H1 (cell line): ENCODE measurements at regions of chr5 and their contacts with region 1.

Region 1: DNA sequence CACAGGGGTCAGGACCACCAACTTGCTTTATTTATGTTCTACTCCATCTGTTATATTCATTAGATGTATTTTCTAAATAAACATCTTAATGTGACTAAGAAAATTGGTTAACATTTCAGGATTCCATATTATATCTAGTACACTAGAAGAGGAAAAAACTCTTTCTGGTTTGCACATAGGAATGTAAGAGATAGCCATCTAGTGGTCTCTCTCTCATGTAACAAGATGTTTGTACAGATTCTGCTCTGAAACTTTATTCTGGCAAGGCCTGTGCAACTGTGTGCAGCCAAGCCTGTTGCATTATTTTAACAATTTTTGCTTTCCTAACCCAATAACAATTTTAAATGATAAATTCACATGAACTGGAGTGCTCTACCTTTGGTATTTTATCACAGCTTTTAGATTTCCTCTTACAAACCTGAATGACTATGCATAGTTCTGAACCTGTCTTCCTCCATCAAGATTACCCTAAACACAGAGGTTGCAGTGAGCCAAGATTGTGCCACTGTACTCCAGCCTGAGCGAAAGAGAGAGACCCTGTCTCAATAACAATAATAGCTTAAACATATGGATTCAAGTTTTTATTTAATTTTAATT is 148.1 kb downstream of the GIN1 start:
- DNase-seq: no peak
- H3K4me3 ChIP-seq: no peak overlapping the region
- H3K27ac ChIP-seq: no peak overlapping the region
- H3K4me1 ChIP-seq: no peaks in the 10 kb centered on the region
- H3K27me3 ChIP-seq: no peaks in the 10 kb centered on the region
- CTCF ChIP-seq: peak in 2 of 3 experiments; percentile 22 to 29; a peak in 2 of 4 replicates
- EP300 ChIP-seq: no peak
- POLR2A ChIP-seq: no peak
- RAD21 ChIP-seq: peak; percentile 37 to 48; a peak in 3 of 4 replicates

Region 2: DNA sequence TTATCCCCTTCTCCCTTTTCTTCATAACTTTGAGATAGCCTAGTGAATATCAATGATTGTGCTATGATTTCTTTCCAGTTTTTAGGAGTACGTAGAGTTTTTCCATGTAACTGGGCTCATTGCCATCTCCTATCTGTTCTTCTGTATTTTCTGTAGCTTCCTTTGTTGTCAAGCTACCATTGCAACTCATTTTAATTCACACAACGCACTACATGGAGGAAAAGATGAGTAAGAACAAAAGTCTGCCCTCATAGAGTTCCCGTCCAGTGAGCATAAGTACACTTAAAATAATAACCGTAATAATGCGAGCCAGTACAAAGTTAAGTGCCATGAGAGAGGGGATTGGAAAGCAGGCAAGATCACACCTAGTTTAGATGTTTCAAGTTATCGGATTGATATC is 39.0 kb before region 1 on chr5:
- CTCF ChIA-PET with region 1: no interaction called
- POLR2A ChIA-PET with region 1: no interaction called
- DNase-seq: no peak
- H3K4me3 ChIP-seq: no peak overlapping the region
- H3K27ac ChIP-seq: no peak overlapping the region
- H3K4me1 ChIP-seq: no peaks in the 10 kb centered on the region
- H3K27me3 ChIP-seq: no peaks in the 10 kb centered on the region
- CTCF ChIP-seq: no peak
- EP300 ChIP-seq: no peak
- POLR2A ChIP-seq: no peak
- RAD21 ChIP-seq: no peak

Region 3: GRCh38 chr5:102959055-102959454 is 12.7 kb before region 1 on chr5:
- CTCF ChIA-PET with region 1: interaction called, 15 read pairs
- POLR2A ChIA-PET with region 1: interaction called, 3 read pairs
- DNase-seq: no peak
- H3K4me3 ChIP-seq: no peak overlapping the region
- H3K27ac ChIP-seq: no peak overlapping the region
- H3K4me1 ChIP-seq: no peaks in the 10 kb centered on the region
- H3K27me3 ChIP-seq: no peaks in the 10 kb centered on the region
- CTCF ChIP-seq: no peak
- EP300 ChIP-seq: no peak
- POLR2A ChIP-seq: no peak
- RAD21 ChIP-seq: no peak

Region 4: DNA sequence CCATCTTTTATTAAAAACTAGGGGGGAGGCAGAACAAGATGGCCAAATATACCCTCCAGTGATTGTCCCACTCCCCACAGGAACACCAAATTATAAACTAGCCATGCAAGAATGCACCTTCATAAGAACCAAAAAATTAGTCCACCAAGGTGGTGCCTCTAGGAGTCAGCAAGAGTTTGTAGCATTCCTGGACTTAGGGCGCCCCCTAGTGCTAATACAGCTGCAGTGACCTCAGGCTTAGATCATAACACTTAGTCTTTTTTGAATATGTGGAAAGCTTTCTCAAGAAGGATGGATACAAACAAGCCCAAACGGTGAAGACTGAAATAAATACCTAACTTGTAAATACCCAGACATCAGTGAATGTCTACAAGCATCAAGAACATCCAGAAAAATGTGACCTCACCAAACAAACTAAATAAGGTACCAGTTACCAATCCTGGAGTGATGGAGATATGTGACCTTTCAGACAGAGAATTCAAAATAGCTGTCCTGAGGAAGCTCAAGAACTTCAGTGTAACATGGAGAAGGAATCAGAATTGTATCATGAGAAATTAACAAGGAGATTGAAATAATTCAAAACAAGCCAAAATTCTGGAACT is 167.6 kb after region 1 on chr5:
- CTCF ChIA-PET with region 1: interaction called, 13 read pairs
- POLR2A ChIA-PET with region 1: no interaction called
- DNase-seq: peak in 1 of 2 experiments; percentile 81
- H3K4me3 ChIP-seq: no peak overlapping the region
- H3K27ac ChIP-seq: no peak overlapping the region
- H3K4me1 ChIP-seq: no peaks in the 10 kb centered on the region
- H3K27me3 ChIP-seq: no peaks in the 10 kb centered on the region
- CTCF ChIP-seq: peak; percentile 20 to 92 (median 88)
- EP300 ChIP-seq: no peak
- POLR2A ChIP-seq: no peak
- RAD21 ChIP-seq: peak; percentile 98